ENCODE measurements at regions of chr11 and their contacts with region 1.

Region 1: GRCh38 chr11:122863704-122864326 is 18.7 kb upstream of the JHY start:
- DNase-seq: peak; percentile 21
- H3K4me3 ChIP-seq: no peak overlapping the region
- H3K27ac ChIP-seq: no peak overlapping the region
- H3K4me1 ChIP-seq: peaks cover 0 to 4% (median 0%) of the 10 kb centered on the region in 4 donors
- H3K27me3 ChIP-seq: peaks cover 0 to 18% (median 0%) of the 10 kb centered on the region in 4 donors
- CTCF ChIP-seq: peak; percentile 79 to 87 (median 84)
- EP300 ChIP-seq: no peak
- POLR2A ChIP-seq: no peak

Region 2: GRCh38 chr11:122981388-122982264 is 117.8 kb after region 1 on chr11 and contains the start of gene BSX:
- intact Hi-C with region 1: no loop called
- DNase-seq: no peak
- H3K4me3 ChIP-seq: no peak within 1 kb of the TSS
- H3K27ac ChIP-seq: no peak within 1 kb of the TSS
- H3K4me1 ChIP-seq: peaks cover 25 to 58% (median 41%) of the 10 kb centered on the region in 4 donors
- H3K27me3 ChIP-seq: peaks cover 11 to 99% (median 89%) of the 10 kb centered on the region in 4 donors
- CTCF ChIP-seq: no peak
- EP300 ChIP-seq: no peak
- POLR2A ChIP-seq: no peak
- total RNA-seq, gene BSX: not detected

Region 3: DNA sequence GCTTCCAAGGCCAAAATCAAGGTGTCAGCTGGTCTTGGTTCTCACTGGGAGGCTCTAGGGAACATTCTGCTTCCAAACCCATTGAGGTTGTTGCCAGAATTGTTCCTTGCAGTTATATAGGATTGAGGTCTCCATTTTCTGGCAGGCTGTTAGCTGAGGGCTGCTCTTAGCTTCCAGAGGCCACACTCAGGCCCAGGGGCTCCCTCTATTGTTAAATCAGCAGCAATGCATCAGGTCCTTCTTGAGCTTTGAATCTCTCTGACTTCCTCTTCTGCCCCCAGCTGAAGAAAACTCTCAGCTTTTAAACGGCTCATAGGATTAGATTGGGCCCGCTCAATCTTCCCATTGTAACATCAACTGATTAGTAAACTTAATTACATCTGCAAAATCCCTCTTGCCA is 157.2 kb after region 1 on chr11:
- intact Hi-C with region 1: loop called (anchors 2 kb)
- DNase-seq: no peak
- H3K4me3 ChIP-seq: no peak overlapping the region
- H3K27ac ChIP-seq: no peak overlapping the region
- H3K4me1 ChIP-seq: peaks cover 0 to 5% (median 4%) of the 10 kb centered on the region in 4 donors
- H3K27me3 ChIP-seq: peaks cover 0 to 20% (median 0%) of the 10 kb centered on the region in 4 donors
- CTCF ChIP-seq: peak; percentile 14 to 56 (median 24)
- EP300 ChIP-seq: no peak
- POLR2A ChIP-seq: no peak

Region 4: DNA sequence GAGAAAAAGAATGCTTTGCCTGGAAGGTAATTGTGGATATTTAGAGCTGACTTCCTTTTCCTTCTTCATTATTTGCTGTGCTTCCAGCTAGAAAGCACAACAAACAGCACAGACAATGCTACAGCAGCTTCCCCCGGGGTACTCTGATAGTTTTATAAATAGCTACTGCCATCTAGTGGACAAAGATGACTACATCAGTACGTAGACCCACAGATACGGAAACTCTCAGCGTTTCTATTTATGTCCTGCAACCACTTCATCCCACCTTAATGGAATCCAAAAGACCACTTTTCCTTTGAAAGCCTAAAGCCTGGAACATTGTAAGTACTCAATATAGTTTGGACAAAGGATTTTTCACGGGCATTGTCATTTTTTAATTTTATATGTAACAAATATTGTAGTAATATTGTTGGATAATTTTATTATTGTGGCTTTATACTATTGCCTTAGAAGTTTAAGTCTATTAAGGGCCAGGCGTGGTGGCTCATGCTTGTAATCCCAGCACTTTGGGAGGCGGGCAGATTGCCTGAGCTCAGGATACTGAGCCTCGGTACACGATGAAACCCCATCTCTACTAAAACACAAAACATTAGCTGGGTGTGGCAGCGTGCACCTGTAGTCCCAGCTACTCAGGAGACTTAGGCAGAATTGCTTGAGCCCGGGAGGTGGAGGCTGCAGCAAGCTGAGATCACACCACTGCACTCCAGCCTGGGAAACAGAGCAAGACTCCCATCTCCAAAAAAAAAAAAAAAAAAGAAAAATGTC is 190.7 kb after region 1 on chr11:
- intact Hi-C with region 1: loop called (anchors 10 kb)
- DNase-seq: no peak
- H3K4me3 ChIP-seq: no peak overlapping the region
- H3K27ac ChIP-seq: peak overlapping the region in 3 of 4 donors; percentile 5 to 33 (median 6)
- H3K4me1 ChIP-seq: peaks cover 41 to 58% (median 49%) of the 10 kb centered on the region in 4 donors
- H3K27me3 ChIP-seq: no peaks in the 10 kb centered on the region
- CTCF ChIP-seq: peak; percentile 63 to 74 (median 73)
- EP300 ChIP-seq: no peak
- POLR2A ChIP-seq: no peak

Region 5: DNA sequence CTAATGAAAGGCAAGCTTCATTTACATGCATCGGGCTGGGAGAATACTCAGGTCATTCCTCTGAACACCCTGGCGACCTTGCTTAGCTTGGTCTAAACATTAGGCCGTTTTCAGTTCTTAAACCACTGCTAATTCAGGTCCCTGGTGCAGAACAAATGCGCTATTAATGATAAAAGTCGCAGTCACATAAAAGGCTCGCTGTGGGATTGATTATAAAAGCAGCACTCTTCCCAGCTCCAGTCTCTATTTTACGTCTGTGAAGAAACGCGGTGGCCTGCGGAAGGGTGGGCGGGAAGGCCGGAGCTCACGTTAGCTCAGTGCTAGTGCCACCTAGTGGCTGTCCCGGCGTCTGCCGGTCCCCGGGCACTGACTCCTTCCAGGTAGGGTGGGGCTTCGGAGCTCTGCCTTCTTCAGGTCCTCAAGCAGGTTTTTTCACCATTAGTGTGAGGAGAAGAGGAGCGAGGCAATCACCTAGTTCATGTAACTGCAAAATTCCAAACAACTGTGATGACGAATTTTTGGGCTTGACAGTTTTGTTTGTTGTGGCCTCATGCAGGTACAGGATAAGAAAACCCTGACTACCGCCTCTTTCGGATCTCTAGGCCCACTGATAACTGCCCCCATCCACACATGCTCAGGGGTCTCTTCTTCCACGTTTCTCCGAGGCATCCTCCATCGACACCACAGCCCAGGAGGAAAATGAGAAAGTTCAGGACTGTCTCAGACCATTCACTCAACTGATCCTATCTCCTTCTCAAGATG is 397.7 kb after region 1 on chr11:
- intact Hi-C with region 1: loop called (anchors 10 kb)
- DNase-seq: no peak
- H3K4me3 ChIP-seq: peak overlapping the region; percentile 33 to 41 (median 36)
- H3K27ac ChIP-seq: peak overlapping the region in 2 of 4 donors; percentile 13 to 47
- H3K4me1 ChIP-seq: peaks cover 10 to 15% (median 12%) of the 10 kb centered on the region in 4 donors
- H3K27me3 ChIP-seq: peaks cover 0 to 6% (median 0%) of the 10 kb centered on the region in 4 donors
- CTCF ChIP-seq: peak; percentile 86 to 97 (median 92)
- EP300 ChIP-seq: no peak
- POLR2A ChIP-seq: no peak

Measured in esophagus muscularis mucosa (tissue), 4 donors.